T-cell (primary cell): ENCODE measurements at regions of chr11 and their contacts with region 1.

Region 1: GRCh38 chr11:65274735-65275682 is 13.2 kb downstream of the POLA2 start:
- DNase-seq: peak in 13 of 35 experiments; percentile 3 to 58 (median 15)
- ATAC-seq: peak in 3 of 4 experiments; percentile 48 to 60 (median 50)
- H3K4me3 ChIP-seq: no peak overlapping the region
- H3K4me3 Mint-ChIP-seq: no peak overlapping the region
- H3K27ac ChIP-seq: no peak overlapping the region
- H3K27ac Mint-ChIP-seq: no peak overlapping the region
- H3K4me1 ChIP-seq: no peaks in the 10 kb centered on the region
- H3K4me1 Mint-ChIP-seq: peaks cover 5 to 10% (median 9%) of the 10 kb centered on the region in 3 donors
- H3K27me3 ChIP-seq: no peaks in the 10 kb centered on the region
- H3K27me3 Mint-ChIP-seq: no peaks in the 10 kb centered on the region

Region 2: DNA sequence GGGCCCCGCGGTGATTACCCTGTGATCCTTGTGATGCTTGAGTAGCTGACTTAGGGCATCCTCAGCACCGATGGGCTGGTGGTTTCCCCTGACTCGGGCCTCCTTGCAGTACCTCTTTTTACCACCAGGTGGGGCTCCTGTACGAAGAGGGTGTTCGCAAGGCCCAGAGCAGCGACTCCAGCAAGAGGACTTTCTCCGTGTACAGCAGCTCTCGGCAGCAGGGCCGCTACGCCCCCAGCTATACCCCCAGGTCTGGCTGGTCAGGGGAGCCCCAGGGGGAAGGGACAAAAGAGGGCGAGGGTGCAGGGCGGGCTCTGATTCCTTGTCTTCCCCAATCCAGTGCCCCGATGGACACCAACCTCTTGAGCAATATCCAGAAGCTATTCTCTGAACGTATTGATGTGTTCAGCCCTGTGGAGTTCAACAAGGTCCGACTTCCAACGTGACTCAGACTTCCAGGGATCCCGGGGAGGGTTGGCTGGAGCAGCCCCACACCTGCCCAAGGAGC is 164.6 kb before region 1 on chr11:
- CTCF ChIA-PET with region 1: interaction called in 1 of 2 experiments, 10 read pairs
- POLR2A ChIA-PET with region 1: no interaction called
- DNase-seq: peak; percentile 82 to 98 (median 94)
- ATAC-seq: peak; percentile 32 to 56 (median 42)
- H3K4me3 ChIP-seq: no peak overlapping the region
- H3K4me3 Mint-ChIP-seq: peak overlapping the region in 2 of 3 donors; percentile 37 to 100
- H3K27ac ChIP-seq: peak overlapping the region; percentile 67
- H3K27ac Mint-ChIP-seq: peak overlapping the region; percentile 83 to 88
- H3K4me1 ChIP-seq: peaks cover 10 to 51% of the 10 kb centered on the region in 2 experiments
- H3K4me1 Mint-ChIP-seq: peaks cover 41 to 44% (median 44%) of the 10 kb centered on the region in 3 donors
- H3K27me3 ChIP-seq: no peaks in the 10 kb centered on the region
- H3K27me3 Mint-ChIP-seq: no peaks in the 10 kb centered on the region

Region 3: GRCh38 chr11:65254724-65255123 is 20.3 kb before region 1 on chr11:
- CTCF ChIA-PET with region 1: no interaction called
- POLR2A ChIA-PET with region 1: no interaction called
- DNase-seq: no peak
- ATAC-seq: no peak
- H3K4me3 ChIP-seq: no peak overlapping the region
- H3K4me3 Mint-ChIP-seq: no peak overlapping the region
- H3K27ac ChIP-seq: no peak overlapping the region
- H3K27ac Mint-ChIP-seq: no peak overlapping the region
- H3K4me1 ChIP-seq: peaks cover 0 to 2% of the 10 kb centered on the region in 2 experiments
- H3K4me1 Mint-ChIP-seq: peaks cover 8 to 9% (median 8%) of the 10 kb centered on the region in 3 donors
- H3K27me3 ChIP-seq: peaks cover 0 to 6% of the 10 kb centered on the region in 2 experiments
- H3K27me3 Mint-ChIP-seq: no peaks in the 10 kb centered on the region

Region 4: GRCh38 chr11:65314501-65315203 is 39.6 kb after region 1 on chr11 and contains the start of gene CDC42EP2:
- CTCF ChIA-PET with region 1: interaction called, 4 to 15 read pairs
- POLR2A ChIA-PET with region 1: no interaction called
- DNase-seq: peak in 33 of 35 experiments; percentile 25 to 82 (median 55)
- ATAC-seq: peak; percentile 93
- H3K4me3 ChIP-seq: peak within 1 kb of the TSS; percentile 82 to 87
- H3K4me3 Mint-ChIP-seq: peak within 1 kb of the TSS; percentile 70 to 76 (median 74)
- H3K27ac ChIP-seq: no peak within 1 kb of the TSS
- H3K27ac Mint-ChIP-seq: peak within 1 kb of the TSS in 1 of 2 donors; percentile 36
- H3K4me1 ChIP-seq: peaks cover 0 to 19% of the 10 kb centered on the region in 2 experiments
- H3K4me1 Mint-ChIP-seq: peaks cover 8 to 13% (median 9%) of the 10 kb centered on the region in 3 donors
- H3K27me3 ChIP-seq: peaks cover 0 to 22% of the 10 kb centered on the region in 2 experiments
- H3K27me3 Mint-ChIP-seq: peaks cover 0 to 5% of the 10 kb centered on the region in 2 donors
- total RNA-seq, gene CDC42EP2: 0.69 to 2.4 (median 0.79) TPM

Region 5: DNA sequence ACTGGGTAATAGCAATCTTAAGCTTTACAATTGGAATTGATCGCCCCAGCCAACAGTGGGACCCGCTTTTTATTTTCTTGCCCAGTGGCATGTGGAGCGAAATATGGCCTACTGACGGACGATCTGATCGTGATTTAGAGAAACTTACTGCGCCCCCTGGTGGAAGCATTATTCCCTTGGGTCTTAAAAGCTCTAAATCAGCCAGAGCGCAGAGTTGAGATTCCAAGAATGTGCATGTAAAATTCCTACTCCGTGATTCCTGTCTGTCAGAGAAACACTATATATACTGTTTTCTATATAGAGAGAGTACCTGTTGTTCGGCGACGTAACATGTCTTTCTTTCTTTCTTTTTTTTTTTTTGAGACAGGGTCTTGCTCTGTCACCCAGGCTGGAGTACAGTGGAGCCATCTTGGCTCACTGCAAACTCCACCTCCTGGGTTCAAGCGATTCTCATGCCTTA is 55.0 kb after region 1 on chr11:
- CTCF ChIA-PET with region 1: interaction called, 6 to 11 read pairs
- POLR2A ChIA-PET with region 1: interaction called in 1 of 2 experiments, 4 read pairs
- DNase-seq: peak; percentile 42 to 93 (median 76)
- ATAC-seq: no peak
- H3K4me3 ChIP-seq: no peak overlapping the region
- H3K4me3 Mint-ChIP-seq: peak overlapping the region in 1 of 3 donors; percentile 21
- H3K27ac ChIP-seq: no peak overlapping the region
- H3K27ac Mint-ChIP-seq: peak overlapping the region; percentile 58 to 64
- H3K4me1 ChIP-seq: peaks cover 6 to 15% of the 10 kb centered on the region in 2 experiments
- H3K4me1 Mint-ChIP-seq: peaks cover 19 to 21% (median 19%) of the 10 kb centered on the region in 3 donors
- H3K27me3 ChIP-seq: peaks cover 0 to 6% of the 10 kb centered on the region in 2 experiments
- H3K27me3 Mint-ChIP-seq: peaks cover 0 to 4% of the 10 kb centered on the region in 2 donors